ENCODE measurements at regions of chr4 and their contacts with region 1.

Region 1: DNA sequence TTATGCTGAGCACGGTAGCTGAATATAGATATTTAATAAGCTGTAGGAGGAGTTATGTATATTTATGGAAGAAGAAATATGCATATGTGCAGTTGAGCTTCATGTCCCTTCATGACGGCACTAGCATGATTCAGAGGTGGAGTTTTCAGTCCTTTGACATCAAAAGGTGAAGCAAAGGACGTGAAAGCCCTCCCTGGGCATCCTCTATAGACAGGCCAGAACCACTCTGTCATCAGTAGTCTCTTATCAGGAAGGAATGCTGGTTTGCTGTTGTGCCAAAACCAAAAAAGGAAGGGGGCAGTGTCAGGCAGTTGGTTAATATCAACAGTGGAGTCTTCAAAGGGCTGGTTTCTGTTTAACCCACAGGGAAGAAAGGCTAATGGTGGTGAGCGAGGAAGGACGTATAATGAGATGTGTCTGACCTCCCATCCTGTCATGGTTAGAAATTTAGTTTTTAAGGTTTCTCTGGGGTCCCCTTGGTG is 23.5 kb upstream of the IL2 start:
- DNase-seq: no peak
- H3K4me3 ChIP-seq: no peak overlapping the region
- H3K27ac ChIP-seq: no peak overlapping the region
- H3K4me1 ChIP-seq: no peaks in the 10 kb centered on the region
- H3K27me3 ChIP-seq: no peaks in the 10 kb centered on the region
- CTCF ChIP-seq: no peak
- POLR2A ChIP-seq: no peak

Region 2: GRCh38 chr4:121964958-121965357 is 515.0 kb before region 1 on chr4:
- intact Hi-C with region 1: loop called (anchors 5 kb)
- DNase-seq: no peak
- H3K4me3 ChIP-seq: no peak overlapping the region
- H3K27ac ChIP-seq: no peak overlapping the region
- H3K4me1 ChIP-seq: no peaks in the 10 kb centered on the region
- H3K27me3 ChIP-seq: no peaks in the 10 kb centered on the region
- CTCF ChIP-seq: no peak
- POLR2A ChIP-seq: no peak

Measured in breast epithelium (tissue), 4 donors.